ENCODE measurements at regions of chr2 and their contacts with region 1.

Region 1: GRCh38 chr2:72973566-72974435 is 56.5 kb downstream of the EMX1 start:
- DNase-seq: no peak
- H3K4me3 ChIP-seq: no peak overlapping the region
- H3K27ac ChIP-seq: no peak overlapping the region
- H3K4me1 ChIP-seq: no peaks in the 10 kb centered on the region
- H3K27me3 ChIP-seq: no peaks in the 10 kb centered on the region
- CTCF ChIP-seq: peak in 2 of 3 donors; percentile 32 to 51
- POLR2A ChIP-seq: no peak

Region 2: DNA sequence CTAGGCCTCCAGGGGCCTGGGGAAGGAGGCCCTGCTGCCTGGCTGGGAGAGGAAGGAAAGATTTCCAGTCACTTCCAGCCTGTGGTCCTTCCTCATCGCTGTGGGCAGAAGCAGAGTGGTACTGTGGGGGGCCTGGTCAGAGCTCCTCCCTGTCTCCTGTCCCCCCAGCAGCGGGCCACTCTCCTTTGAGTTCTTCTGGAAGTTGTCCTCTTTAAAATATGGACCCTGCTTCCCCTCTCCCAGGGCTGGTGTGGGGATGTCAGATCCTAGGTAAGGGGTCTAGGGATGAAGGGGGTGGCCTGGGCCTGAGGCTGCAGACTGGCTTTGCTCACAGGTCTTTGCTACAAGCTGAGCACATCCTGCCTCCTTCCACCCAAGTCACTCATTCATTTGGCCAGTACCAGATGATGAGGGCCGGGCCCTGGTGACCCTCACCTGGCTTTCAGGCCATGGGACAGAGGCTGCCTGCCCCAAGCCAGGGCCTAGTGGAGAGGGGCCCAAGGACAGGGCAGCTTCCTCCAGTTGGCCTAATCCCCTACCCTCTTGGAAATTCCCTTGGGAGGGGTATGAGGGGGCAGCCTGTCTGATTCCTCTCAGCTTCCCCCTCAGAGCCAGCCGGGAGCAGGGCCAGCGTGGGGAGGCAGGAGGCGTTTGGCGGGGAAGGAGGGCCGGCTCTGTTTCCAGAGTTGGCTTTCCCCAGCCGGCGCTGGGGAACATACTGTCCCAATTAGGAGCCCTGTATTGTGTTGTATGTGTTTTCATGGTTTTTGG is 1288.5 kb before region 1 on chr2:
- intact Hi-C with region 1: loop called (anchors 5 kb)
- DNase-seq: peak in 1 of 2 donors; percentile 43
- H3K4me3 ChIP-seq: no peak overlapping the region
- H3K27ac ChIP-seq: no peak overlapping the region
- H3K4me1 ChIP-seq: no peaks in the 10 kb centered on the region
- H3K27me3 ChIP-seq: no peaks in the 10 kb centered on the region
- CTCF ChIP-seq: no peak
- POLR2A ChIP-seq: no peak

Region 3: DNA sequence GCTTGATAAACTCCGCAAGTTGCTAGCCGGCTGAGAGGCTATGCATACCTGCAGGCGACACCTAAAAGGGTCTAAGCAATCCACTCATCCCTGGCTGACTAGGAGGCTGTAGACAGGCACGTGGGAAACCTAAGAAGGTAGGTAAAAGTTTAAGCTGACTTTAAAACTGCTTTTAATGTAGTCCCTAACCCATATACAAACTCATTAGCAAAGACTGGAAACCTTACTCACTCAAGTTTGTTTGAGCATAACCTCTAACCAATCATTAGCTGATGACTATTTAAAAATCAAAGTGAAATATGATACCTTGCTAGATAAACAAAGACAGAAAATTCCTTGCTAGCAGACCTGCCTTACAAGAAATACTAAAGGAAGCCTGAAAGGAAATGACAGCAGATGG is 254.4 kb before region 1 on chr2:
- intact Hi-C with region 1: no loop called
- DNase-seq: no peak
- H3K4me3 ChIP-seq: no peak overlapping the region
- H3K27ac ChIP-seq: no peak overlapping the region
- H3K4me1 ChIP-seq: no peaks in the 10 kb centered on the region
- H3K27me3 ChIP-seq: no peaks in the 10 kb centered on the region
- CTCF ChIP-seq: no peak
- POLR2A ChIP-seq: no peak